T-cell (primary cell): ENCODE measurements at regions of chr5 and their contacts with region 1.

Region 1: DNA sequence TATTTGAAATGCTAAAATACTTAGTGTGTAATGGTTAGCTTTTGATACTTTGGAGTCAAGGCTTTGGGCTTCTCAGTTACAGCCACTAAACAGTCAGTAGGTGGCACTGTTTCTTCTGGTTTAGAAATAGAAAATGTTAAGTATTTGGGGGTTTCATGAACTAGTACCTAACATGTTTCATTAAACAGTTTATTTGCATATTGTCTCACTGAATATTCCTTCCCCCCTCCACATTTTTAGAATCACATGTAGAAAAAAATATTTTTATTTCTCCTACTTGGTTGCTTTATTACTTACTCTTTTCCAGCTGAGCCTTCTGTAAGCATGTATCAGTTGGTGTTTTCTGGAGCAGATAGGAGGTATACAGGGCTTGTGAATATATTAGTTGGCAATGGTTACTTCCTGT is 48.0 kb downstream of the IPO11 start:
- DNase-seq: peak in 1 of 35 experiments; percentile 56
- ATAC-seq: peak in 2 of 4 experiments; percentile 40 to 46
- H3K4me3 ChIP-seq: no peak overlapping the region
- H3K4me3 Mint-ChIP-seq: no peak overlapping the region
- H3K27ac ChIP-seq: no peak overlapping the region
- H3K27ac Mint-ChIP-seq: no peak overlapping the region
- H3K4me1 ChIP-seq: no peaks in the 10 kb centered on the region
- H3K4me1 Mint-ChIP-seq: peaks cover 1 to 7% (median 4%) of the 10 kb centered on the region in 3 donors
- H3K27me3 ChIP-seq: no peaks in the 10 kb centered on the region
- H3K27me3 Mint-ChIP-seq: no peaks in the 10 kb centered on the region

Region 2: DNA sequence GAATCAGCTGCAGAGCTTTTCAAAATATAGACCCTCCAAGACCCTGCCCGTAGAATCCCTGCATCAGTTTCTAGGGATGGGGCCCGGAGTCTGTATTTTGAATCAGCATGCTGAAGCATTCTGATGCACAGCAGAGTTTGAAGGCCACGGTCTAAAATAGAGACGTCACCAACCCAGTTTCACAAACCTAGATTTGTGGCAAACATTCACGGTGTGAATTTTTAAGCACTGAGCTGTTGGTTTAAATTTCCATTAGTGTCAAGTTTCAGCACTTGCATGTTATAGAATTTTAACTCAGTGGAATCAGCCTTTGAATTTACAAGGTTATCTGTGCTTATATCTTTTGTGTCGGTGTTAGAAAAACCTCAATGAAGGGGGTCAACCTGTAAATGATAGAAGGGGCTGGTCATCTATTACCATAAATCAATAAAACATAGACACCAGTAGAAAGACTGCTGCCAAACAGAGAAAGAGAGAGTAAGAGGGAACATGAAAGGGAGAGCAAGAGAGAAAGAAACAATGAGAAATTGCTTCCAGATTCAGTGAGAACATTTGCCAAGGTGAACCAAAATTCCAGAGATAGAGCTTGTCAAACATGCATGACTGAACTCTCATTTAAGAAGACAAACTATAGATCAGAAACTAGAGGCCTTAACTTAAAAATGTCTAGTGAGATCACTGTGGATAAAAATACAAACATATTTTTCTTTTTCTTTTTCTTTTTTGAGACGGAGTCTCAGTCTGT is 713.6 kb before region 1 on chr5:
- CTCF ChIA-PET with region 1: no interaction called
- POLR2A ChIA-PET with region 1: no interaction called
- DNase-seq: no peak
- ATAC-seq: no peak
- H3K4me3 ChIP-seq: no peak overlapping the region
- H3K4me3 Mint-ChIP-seq: no peak overlapping the region
- H3K27ac ChIP-seq: no peak overlapping the region
- H3K27ac Mint-ChIP-seq: no peak overlapping the region
- H3K4me1 ChIP-seq: no peaks in the 10 kb centered on the region
- H3K4me1 Mint-ChIP-seq: no peaks in the 10 kb centered on the region
- H3K27me3 ChIP-seq: peaks cover 0 to 3% of the 10 kb centered on the region in 2 experiments
- H3K27me3 Mint-ChIP-seq: peaks cover 0 to 10% of the 10 kb centered on the region in 2 donors

Region 3: GRCh38 chr5:62051747-62052146 is 408.8 kb before region 1 on chr5:
- CTCF ChIA-PET with region 1: no interaction called
- POLR2A ChIA-PET with region 1: no interaction called
- DNase-seq: no peak
- ATAC-seq: no peak
- H3K4me3 ChIP-seq: no peak overlapping the region
- H3K4me3 Mint-ChIP-seq: no peak overlapping the region
- H3K27ac ChIP-seq: no peak overlapping the region
- H3K27ac Mint-ChIP-seq: no peak overlapping the region
- H3K4me1 ChIP-seq: peaks cover 0 to 2% of the 10 kb centered on the region in 2 experiments
- H3K4me1 Mint-ChIP-seq: no peaks in the 10 kb centered on the region
- H3K27me3 ChIP-seq: peaks cover 0 to 6% of the 10 kb centered on the region in 2 experiments
- H3K27me3 Mint-ChIP-seq: peaks cover 0 to 8% of the 10 kb centered on the region in 2 donors

Region 4: DNA sequence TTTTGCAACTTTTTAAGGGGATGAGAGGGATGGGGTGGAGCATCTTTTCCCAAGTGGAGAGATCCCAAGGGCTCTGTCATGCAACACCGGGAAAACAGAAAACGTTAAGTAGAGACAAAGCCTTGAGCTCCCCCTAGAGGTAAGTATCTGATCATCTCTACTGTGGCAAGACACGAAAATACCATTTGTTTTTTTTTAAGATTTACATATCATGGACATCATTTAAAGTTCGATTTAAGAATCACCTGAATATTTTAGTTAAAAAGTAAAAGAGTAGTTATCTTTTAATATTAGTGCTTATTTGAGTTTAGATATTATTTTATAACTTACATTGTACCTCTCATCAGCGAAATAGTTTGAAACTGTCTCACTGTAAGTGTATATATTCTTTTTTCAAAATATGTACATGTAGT is 318.4 kb after region 1 on chr5:
- CTCF ChIA-PET with region 1: interaction called in 1 of 2 experiments, 14 read pairs
- POLR2A ChIA-PET with region 1: no interaction called
- DNase-seq: peak in 2 of 35 experiments; percentile 0 to 57
- ATAC-seq: peak in 1 of 4 experiments; percentile 29
- H3K4me3 ChIP-seq: no peak overlapping the region
- H3K4me3 Mint-ChIP-seq: no peak overlapping the region
- H3K27ac ChIP-seq: no peak overlapping the region
- H3K27ac Mint-ChIP-seq: no peak overlapping the region
- H3K4me1 ChIP-seq: no peaks in the 10 kb centered on the region
- H3K4me1 Mint-ChIP-seq: peaks cover 0 to 1% (median 0%) of the 10 kb centered on the region in 3 donors
- H3K27me3 ChIP-seq: no peaks in the 10 kb centered on the region
- H3K27me3 Mint-ChIP-seq: peaks cover 0 to 3% of the 10 kb centered on the region in 2 donors